Dendritic cell treated with granulocyte-macrophage colony-stimulating factor and Interleukin-4, amounts not matched to agents 40 ng/mL and 50 ng/mL, for 4 days (primary cell): ENCODE measurements at regions of chr20 and their contacts with region 1.

Region 1: GRCh38 chr20:22691369-22692118 is 107.2 kb upstream of the FOXA2 start:
- H3K4me3 Mint-ChIP-seq: no peak overlapping the region
- H3K27ac Mint-ChIP-seq: no peak overlapping the region
- H3K4me1 Mint-ChIP-seq: peaks cover 35% of the 10 kb centered on the region
- H3K27me3 Mint-ChIP-seq: no peaks in the 10 kb centered on the region

Region 2: GRCh38 chr20:22974353-22974752 is 282.8 kb after region 1 on chr20:
- intact Hi-C with region 1: loop called (anchors 5 kb)
- H3K4me3 Mint-ChIP-seq: no peak overlapping the region
- H3K27ac Mint-ChIP-seq: no peak overlapping the region
- H3K4me1 Mint-ChIP-seq: no peaks in the 10 kb centered on the region
- H3K27me3 Mint-ChIP-seq: peaks cover 76% of the 10 kb centered on the region

Region 3: GRCh38 chr20:23235173-23236027 is 543.9 kb after region 1 on chr20:
- intact Hi-C with region 1: loop called (anchors 2 kb)
- H3K4me3 Mint-ChIP-seq: no peak overlapping the region
- H3K27ac Mint-ChIP-seq: no peak overlapping the region
- H3K4me1 Mint-ChIP-seq: peaks cover 36% of the 10 kb centered on the region
- H3K27me3 Mint-ChIP-seq: peaks cover 25% of the 10 kb centered on the region

Region 4: GRCh38 chr20:23340524-23340923 is 649.0 kb after region 1 on chr20:
- intact Hi-C with region 1: loop called (anchors 1 kb)
- H3K4me3 Mint-ChIP-seq: no peak overlapping the region
- H3K27ac Mint-ChIP-seq: no peak overlapping the region
- H3K4me1 Mint-ChIP-seq: no peaks in the 10 kb centered on the region
- H3K27me3 Mint-ChIP-seq: peaks cover 11% of the 10 kb centered on the region

Region 5: GRCh38 chr20:23441850-23442313 is 750.3 kb after region 1 on chr20:
- intact Hi-C with region 1: loop called (anchors 10 kb)
- H3K4me3 Mint-ChIP-seq: no peak overlapping the region
- H3K27ac Mint-ChIP-seq: no peak overlapping the region
- H3K4me1 Mint-ChIP-seq: no peaks in the 10 kb centered on the region
- H3K27me3 Mint-ChIP-seq: peaks cover 3% of the 10 kb centered on the region